Sciatic nerve (tissue), 2 donors: ENCODE measurements at regions of chr7 and their contacts with region 1.

Region 1: GRCh38 chr7:37504801-37505200 is 56.1 kb upstream of the ELMO1 start:
- DNase-seq: no peak
- ATAC-seq: peak; percentile 80

Region 2: DNA sequence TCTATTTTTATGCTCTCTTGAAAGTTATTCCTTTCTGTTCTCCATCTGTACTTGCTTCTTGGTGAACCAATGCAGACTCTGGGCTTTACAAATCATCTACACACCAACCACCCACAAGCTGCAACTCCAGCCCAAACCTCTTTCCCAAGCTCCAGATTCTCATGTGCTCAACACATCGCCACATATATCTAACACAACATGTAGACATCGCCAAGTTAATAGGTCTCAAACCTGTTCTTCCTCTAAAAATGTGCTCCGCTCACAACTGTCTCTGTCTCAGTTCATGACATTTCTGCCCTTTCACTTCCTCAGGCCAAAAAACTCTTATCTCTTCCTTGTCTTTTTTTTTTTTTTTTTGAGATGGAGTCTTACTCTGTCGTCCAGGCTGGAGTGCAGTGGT is 1447.5 kb before region 1 on chr7:
- intact Hi-C with region 1: no loop called
- DNase-seq: no peak
- ATAC-seq: no peak

Region 3: DNA sequence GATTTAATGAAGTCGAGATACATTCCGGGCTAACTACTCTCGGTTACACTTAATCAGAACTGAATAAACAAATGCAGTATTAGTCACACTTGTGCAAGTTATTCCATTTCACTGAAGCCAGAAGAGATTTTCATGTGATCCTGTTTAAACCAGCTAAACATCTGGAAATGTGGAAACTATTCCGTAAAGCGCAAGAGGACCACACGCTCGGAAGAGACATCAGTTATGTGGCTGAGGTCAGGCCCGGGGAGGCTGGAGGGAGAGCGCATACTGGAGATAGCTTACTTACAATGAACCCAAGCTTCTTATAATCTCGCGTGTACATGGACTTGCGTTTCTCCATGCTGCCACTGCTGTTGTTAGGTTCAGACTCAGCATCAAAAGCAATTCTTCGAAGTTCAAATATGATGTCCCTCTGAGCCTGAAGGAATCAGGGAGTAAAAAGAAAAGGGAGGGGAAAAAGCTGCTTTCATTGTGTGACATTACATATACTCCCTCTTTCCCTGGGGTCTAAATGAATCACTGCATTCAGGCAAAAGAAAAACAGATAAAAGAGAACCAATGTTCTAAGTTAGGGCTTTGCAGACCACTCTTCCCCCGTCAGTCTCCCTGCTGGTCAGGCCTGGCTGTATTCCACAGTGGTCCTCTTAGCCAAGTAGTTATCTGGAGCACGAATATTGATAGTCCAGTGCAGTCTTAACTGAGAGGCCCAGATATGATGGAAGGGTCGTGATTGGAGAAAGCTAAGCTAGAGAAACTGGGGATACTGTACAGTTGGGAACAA is 293.5 kb before region 1 on chr7:
- intact Hi-C with region 1: loop called (anchors 10 kb)
- DNase-seq: peak; percentile 79
- ATAC-seq: peak; percentile 91